ENCODE measurements at regions of chr10 and their contacts with region 1.

Region 1: GRCh38 chr10:119608316-119609155 is 11.8 kb upstream of the TIAL1 start:
- DNase-seq: peak; percentile 38
- H3K4me3 ChIP-seq: no peak overlapping the region
- H3K27ac ChIP-seq: no peak overlapping the region
- H3K4me1 ChIP-seq: no peaks in the 10 kb centered on the region
- H3K27me3 ChIP-seq: no peaks in the 10 kb centered on the region
- CTCF ChIP-seq: peak; percentile 74 to 90

Region 2: GRCh38 chr10:119650692-119651513 is 42.4 kb after region 1 on chr10 and contains the start of gene BAG3:
- CTCF ChIA-PET with region 1: no interaction called
- dilution Hi-C with region 1: no loop called
- in situ Hi-C with region 1: loop called in 1 of 2 experiments (anchors 10 kb)
- intact Hi-C with region 1: loop called (anchors 1 kb)
- DNase-seq: peak; percentile 92
- H3K4me3 ChIP-seq: peak within 1 kb of the TSS; percentile 95 to 97 (median 96)
- H3K27ac ChIP-seq: peak within 1 kb of the TSS; percentile 77
- H3K4me1 ChIP-seq: peaks cover 24% of the 10 kb centered on the region
- H3K27me3 ChIP-seq: no peaks in the 10 kb centered on the region
- CTCF ChIP-seq: no peak
- total RNA-seq, gene BAG3: 41.0 to 117 TPM

Region 3: DNA sequence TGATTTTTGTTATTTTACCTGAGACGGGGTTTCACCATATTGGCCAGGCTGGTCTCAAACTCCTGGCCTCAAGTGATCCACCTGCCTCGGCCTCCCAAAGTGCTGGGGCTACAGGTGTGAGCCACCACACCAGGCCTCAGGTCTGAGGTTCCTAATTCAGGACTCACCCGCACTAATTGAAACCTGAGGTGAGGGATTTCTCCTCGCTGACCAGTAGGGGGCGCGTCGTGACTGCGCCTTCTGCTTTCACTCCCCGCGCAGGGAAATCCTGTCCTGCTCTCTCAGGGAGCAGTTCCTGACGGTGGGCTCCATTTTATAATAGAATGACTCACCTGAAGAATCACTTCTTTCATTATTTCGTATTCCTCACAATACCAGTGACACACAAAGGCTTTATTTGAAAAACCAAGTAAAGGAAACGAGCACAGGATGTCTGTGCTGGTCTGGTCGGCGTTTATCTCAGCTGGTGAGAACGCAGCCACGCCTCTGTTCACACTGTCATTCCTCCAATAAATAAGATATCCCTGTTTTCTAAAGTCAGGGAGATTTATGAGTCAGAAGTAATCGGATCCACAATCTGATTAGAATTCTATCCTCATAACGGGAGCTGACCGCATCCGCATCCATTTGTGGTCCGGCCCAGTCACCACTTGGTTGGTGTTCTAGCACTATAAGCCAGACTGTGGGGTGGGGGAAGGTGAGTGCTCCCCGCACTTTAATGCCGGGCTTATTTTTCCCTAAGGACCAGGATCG is 78.1 kb after region 1 on chr10:
- CTCF ChIA-PET with region 1: no interaction called
- dilution Hi-C with region 1: no loop called
- in situ Hi-C with region 1: no loop called
- intact Hi-C with region 1: loop called (anchors 2 kb)
- DNase-seq: peak; percentile 98
- H3K4me3 ChIP-seq: peak overlapping the region in 1 of 3 experiments; percentile 28
- H3K27ac ChIP-seq: peak overlapping the region; percentile 38
- H3K4me1 ChIP-seq: peaks cover 35% of the 10 kb centered on the region
- H3K27me3 ChIP-seq: no peaks in the 10 kb centered on the region
- CTCF ChIP-seq: peak; percentile 76 to 85

Region 4: GRCh38 chr10:119849031-119849789 is 240.7 kb after region 1 on chr10:
- CTCF ChIA-PET with region 1: interaction called, 17 read pairs
- dilution Hi-C with region 1: no loop called
- in situ Hi-C with region 1: loop called in 1 of 2 experiments (anchors 25 kb)
- intact Hi-C with region 1: no loop called
- DNase-seq: no peak
- H3K4me3 ChIP-seq: no peak overlapping the region
- H3K27ac ChIP-seq: peak overlapping the region; percentile 43
- H3K4me1 ChIP-seq: peaks cover 13% of the 10 kb centered on the region
- H3K27me3 ChIP-seq: no peaks in the 10 kb centered on the region
- CTCF ChIP-seq: no peak

Region 5: DNA sequence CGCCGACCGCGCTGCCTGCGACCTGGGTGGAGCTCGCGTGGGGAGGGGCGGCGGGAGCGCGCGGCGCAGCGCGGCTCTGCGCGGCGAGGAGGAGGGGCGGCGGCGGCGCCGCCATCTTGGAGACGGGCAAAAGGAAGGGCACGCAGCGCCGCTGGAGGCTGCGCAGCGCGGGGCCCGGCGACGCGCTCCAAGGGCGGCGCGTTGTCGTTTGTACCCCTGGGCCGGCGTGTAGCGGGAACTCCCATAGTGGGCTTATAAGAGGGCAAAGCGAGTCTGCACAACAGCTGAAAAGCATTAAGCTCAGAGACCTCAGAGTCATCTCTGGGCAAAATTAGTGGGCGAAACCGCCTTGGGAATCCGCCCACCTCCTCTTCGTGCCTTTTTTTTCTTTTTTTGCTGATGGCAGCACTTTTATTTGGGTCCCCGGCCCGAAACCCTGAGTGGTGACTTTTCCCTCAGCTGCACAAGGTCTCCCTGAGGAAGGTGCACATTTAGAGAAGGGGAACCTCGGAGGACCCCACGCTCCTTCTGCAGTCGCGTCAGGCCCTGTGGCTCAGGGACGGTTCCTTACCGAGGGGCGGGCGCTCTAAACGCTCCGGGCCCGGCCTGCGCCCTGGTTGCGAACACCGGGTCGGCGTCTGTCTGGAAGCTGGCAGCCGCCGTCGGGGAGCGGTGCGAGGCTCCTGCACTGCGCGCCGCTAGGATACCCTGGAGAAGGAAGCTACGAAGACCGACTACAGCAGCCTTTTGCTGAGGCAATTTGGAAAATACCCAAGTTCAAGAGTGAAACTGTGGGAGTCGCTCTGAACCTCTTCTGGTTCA is 264.5 kb after region 1 on chr10:
- CTCF ChIA-PET with region 1: no interaction called
- dilution Hi-C with region 1: no loop called
- in situ Hi-C with region 1: loop called (anchors 10 to 25 kb)
- intact Hi-C with region 1: no loop called
- DNase-seq: peak; percentile 78
- H3K4me3 ChIP-seq: peak overlapping the region; percentile 63 to 83 (median 78)
- H3K27ac ChIP-seq: peak overlapping the region; percentile 77
- H3K4me1 ChIP-seq: peaks cover 2% of the 10 kb centered on the region
- H3K27me3 ChIP-seq: no peaks in the 10 kb centered on the region
- CTCF ChIP-seq: no peak

Measured in mammary epithelial cell (primary cell).